Tibial artery (tissue), 4 donors: ENCODE measurements at regions of chr10 and their contacts with region 1.

Region 1: DNA sequence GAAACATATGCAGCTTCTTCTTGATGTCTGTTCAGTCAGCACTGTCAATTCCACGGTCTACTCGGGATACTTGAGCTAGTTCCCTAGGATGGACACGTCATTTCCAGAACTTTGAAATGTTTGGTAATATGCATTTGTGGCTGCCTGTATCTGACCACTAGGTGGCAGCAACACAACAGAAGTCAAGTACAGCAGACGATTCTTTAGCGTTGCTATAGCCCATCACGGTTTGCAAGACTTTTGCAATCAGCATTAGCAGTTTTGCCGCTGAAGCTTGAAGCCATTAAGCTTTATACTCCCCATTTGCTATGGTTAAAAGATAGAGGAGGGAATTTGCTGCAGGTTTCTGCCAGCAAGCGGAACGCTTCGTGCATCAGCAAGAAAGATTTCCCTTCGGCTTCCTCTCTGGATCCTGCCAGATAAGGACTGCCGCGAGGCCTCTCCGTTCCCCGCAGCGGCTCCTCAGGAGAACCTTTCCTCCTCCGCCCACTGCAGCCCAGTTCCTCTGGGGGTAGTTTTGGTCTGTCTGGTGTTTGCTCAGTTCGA is 63.5 kb downstream of the ABCC2 start:
- DNase-seq: peak; percentile 84 to 87
- H3K4me3 ChIP-seq: peak overlapping the region; percentile 27 to 38
- H3K27ac ChIP-seq: no peak overlapping the region
- H3K4me1 ChIP-seq: peaks cover 0 to 7% (median 4%) of the 10 kb centered on the region in 4 donors
- H3K27me3 ChIP-seq: no peaks in the 10 kb centered on the region
- CTCF ChIP-seq: peak; percentile 89 to 95

Region 2: DNA sequence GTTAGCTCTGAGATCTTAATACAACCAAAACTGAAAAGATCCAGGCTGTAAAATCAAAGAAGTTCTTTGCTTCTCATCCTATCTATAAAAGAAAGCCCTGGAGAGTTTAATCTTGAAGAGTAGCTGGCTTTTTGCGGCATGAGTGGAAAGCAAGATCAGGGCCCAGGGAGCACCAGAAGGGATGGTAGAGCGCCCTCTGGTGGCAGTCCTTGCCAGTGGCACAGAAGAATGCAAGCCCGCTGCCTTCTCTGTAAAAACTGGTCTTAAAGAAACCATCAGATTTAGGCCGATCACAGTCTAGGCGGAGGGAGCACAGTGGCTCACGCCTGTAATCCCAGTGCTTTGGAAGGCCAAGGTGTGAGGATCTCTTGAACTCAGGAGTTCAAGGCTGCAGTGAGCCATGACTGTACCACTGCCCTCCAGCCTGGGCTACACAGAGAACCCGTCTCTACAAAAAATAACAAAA is 200.1 kb after region 1 on chr10:
- intact Hi-C with region 1: loop called (anchors 2 kb)
- DNase-seq: peak; percentile 86 to 87
- H3K4me3 ChIP-seq: no peak overlapping the region
- H3K27ac ChIP-seq: no peak overlapping the region
- H3K4me1 ChIP-seq: no peaks in the 10 kb centered on the region
- H3K27me3 ChIP-seq: no peaks in the 10 kb centered on the region
- CTCF ChIP-seq: peak; percentile 88 to 96

Region 3: DNA sequence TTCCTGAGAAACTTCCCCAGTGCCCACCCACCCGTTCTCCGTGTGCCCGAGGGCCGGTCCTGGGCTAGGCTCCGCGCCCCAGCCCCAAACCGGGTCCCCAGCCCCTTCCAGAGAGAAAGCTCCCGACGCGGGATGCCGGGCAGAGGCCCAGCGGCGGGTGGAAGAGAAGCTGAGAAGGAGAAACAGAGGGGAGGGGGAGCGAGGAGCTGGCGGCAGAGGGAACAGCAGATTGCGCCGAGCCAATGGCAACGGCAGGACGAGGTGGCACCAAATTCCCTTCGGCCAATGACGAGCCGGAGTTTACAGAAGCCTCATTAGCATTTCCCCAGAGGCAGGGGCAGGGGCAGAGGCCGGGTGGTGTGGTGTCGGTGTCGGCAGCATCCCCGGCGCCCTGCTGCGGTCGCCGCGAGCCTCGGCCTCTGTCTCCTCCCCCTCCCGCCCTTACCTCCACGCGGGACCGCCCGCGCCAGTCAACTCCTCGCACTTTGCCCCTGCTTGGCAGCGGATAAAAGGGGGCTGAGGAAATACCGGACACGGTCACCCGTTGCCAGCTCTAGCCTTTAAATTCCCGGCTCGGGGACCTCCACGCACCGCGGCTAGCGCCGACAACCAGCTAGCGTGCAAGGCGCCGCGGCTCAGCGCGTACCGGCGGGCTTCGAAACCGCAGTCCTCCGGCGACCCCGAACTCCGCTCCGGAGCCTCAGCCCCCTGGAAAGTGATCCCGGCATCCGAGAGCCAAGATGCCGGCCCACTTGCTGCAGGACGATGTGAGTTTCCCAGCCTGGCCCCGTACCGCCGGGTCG is 501.1 kb after region 1 on chr10 and contains the start of gene SCD:
- intact Hi-C with region 1: no loop called
- DNase-seq: peak; percentile 73 to 89
- H3K4me3 ChIP-seq: peak within 1 kb of the TSS; percentile 65 to 79
- H3K27ac ChIP-seq: peak within 1 kb of the TSS; percentile 71 to 73
- H3K4me1 ChIP-seq: peaks cover 0 to 20% (median 11%) of the 10 kb centered on the region in 4 donors
- H3K27me3 ChIP-seq: no peaks in the 10 kb centered on the region
- CTCF ChIP-seq: no peak